ENCODE measurements at regions of chr6 and their contacts with region 1.

Region 1: DNA sequence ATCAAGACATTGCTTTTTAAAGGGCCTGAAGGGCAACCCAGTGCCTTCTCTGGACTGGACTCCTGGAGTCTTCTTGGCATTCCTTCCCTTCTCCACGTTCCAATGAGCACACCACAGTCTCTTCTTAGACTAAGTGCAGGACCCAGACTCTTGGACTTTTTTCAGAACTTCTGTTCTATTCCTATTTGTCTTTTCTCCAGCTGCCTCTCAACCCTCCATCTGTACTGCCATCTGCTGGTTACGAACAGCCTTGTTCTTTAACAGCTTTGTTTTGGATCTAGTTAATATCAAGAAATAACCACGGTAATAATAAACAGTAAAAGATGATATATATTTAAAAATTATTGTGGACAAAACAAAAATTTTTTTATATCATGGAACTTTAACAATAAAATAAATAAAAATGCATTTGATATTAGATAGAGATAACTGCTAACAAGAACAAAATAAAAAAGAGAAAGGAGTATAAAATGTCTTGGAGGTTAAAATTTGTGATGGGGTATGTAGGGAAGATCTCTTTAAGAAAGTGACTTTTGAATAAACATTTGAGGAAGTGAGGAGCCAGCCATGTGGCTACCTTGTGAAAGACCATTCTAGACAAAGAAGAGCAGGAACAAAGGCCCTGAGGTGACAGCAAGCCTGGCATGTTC is 105.1 kb upstream of the HCRTR2 start:
- DNase-seq: peak in 1 of 2 donors; percentile 6
- ATAC-seq: peak in 2 of 3 donors; percentile 63 to 69
- H3K4me3 ChIP-seq: no peak overlapping the region
- H3K4me3 Mint-ChIP-seq: no peak overlapping the region
- H3K27ac ChIP-seq: no peak overlapping the region
- H3K27ac Mint-ChIP-seq: no peak overlapping the region
- H3K4me1 ChIP-seq: peaks cover 3% of the 10 kb centered on the region
- H3K4me1 Mint-ChIP-seq: peaks cover 5 to 25% of the 10 kb centered on the region in 2 donors
- H3K27me3 ChIP-seq: no peaks in the 10 kb centered on the region
- H3K27me3 Mint-ChIP-seq: peaks cover 10 to 13% of the 10 kb centered on the region in 2 donors
- CTCF ChIP-seq: peak; percentile 90

Region 2: GRCh38 chr6:53979468-53980067 is 1089.7 kb before region 1 on chr6:
- intact Hi-C with region 1: loop called (anchors 2 kb)
- DNase-seq: peak in 1 of 2 donors; percentile 38
- ATAC-seq: peak in 1 of 3 donors; percentile 48
- H3K4me3 ChIP-seq: no peak overlapping the region
- H3K4me3 Mint-ChIP-seq: no peak overlapping the region
- H3K27ac ChIP-seq: no peak overlapping the region
- H3K27ac Mint-ChIP-seq: no peak overlapping the region
- H3K4me1 ChIP-seq: no peaks in the 10 kb centered on the region
- H3K4me1 Mint-ChIP-seq: no peaks in the 10 kb centered on the region
- H3K27me3 ChIP-seq: no peaks in the 10 kb centered on the region
- H3K27me3 Mint-ChIP-seq: no peaks in the 10 kb centered on the region
- CTCF ChIP-seq: peak; percentile 88

Region 3: GRCh38 chr6:54717849-54718455 is 351.3 kb before region 1 on chr6:
- intact Hi-C with region 1: loop called (anchors 1 kb)
- DNase-seq: peak; percentile 44 to 56
- ATAC-seq: peak; percentile 63 to 80 (median 64)
- H3K4me3 ChIP-seq: no peak overlapping the region
- H3K4me3 Mint-ChIP-seq: no peak overlapping the region
- H3K27ac ChIP-seq: no peak overlapping the region
- H3K27ac Mint-ChIP-seq: no peak overlapping the region
- H3K4me1 ChIP-seq: no peaks in the 10 kb centered on the region
- H3K4me1 Mint-ChIP-seq: no peaks in the 10 kb centered on the region
- H3K27me3 ChIP-seq: no peaks in the 10 kb centered on the region
- H3K27me3 Mint-ChIP-seq: peaks cover 3 to 7% of the 10 kb centered on the region in 2 donors
- CTCF ChIP-seq: peak; percentile 91

Region 4: DNA sequence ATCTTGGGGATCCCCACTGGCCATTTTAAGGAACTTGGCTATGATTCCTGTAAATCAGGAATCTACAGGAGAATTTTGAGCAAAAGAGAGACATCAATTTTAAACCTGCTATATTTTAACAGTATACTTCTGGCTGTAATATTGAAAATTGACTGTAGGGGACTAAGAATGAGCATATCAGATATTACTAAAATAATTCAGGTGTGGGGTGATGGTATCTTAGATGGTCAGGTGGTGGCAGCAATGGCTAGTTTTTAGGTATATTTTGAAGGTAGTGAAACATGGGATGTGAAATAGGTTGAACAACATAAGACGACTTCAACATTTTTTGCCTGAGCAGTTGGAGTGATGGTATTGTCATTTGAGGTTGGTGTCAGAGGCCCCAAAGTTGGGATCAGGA is 190.6 kb before region 1 on chr6:
- intact Hi-C with region 1: loop called (anchors 1 kb)
- DNase-seq: no peak
- ATAC-seq: peak in 1 of 3 donors; percentile 58
- H3K4me3 ChIP-seq: no peak overlapping the region
- H3K4me3 Mint-ChIP-seq: no peak overlapping the region
- H3K27ac ChIP-seq: no peak overlapping the region
- H3K27ac Mint-ChIP-seq: no peak overlapping the region
- H3K4me1 ChIP-seq: no peaks in the 10 kb centered on the region
- H3K4me1 Mint-ChIP-seq: no peaks in the 10 kb centered on the region
- H3K27me3 ChIP-seq: no peaks in the 10 kb centered on the region
- H3K27me3 Mint-ChIP-seq: no peaks in the 10 kb centered on the region
- CTCF ChIP-seq: peak; percentile 32

Region 5: GRCh38 chr6:54992789-54993188 is 76.5 kb before region 1 on chr6:
- intact Hi-C with region 1: no loop called
- DNase-seq: no peak
- ATAC-seq: no peak
- H3K4me3 ChIP-seq: no peak overlapping the region
- H3K4me3 Mint-ChIP-seq: no peak overlapping the region
- H3K27ac ChIP-seq: no peak overlapping the region
- H3K27ac Mint-ChIP-seq: no peak overlapping the region
- H3K4me1 ChIP-seq: no peaks in the 10 kb centered on the region
- H3K4me1 Mint-ChIP-seq: peaks cover 6 to 12% of the 10 kb centered on the region in 2 donors
- H3K27me3 ChIP-seq: no peaks in the 10 kb centered on the region
- H3K27me3 Mint-ChIP-seq: no peaks in the 10 kb centered on the region
- CTCF ChIP-seq: no peak

Measured in natural killer cell (primary cell).